Sciatic nerve (tissue), 2 donors: ENCODE measurements at regions of chr9 and their contacts with region 1.

Region 1: DNA sequence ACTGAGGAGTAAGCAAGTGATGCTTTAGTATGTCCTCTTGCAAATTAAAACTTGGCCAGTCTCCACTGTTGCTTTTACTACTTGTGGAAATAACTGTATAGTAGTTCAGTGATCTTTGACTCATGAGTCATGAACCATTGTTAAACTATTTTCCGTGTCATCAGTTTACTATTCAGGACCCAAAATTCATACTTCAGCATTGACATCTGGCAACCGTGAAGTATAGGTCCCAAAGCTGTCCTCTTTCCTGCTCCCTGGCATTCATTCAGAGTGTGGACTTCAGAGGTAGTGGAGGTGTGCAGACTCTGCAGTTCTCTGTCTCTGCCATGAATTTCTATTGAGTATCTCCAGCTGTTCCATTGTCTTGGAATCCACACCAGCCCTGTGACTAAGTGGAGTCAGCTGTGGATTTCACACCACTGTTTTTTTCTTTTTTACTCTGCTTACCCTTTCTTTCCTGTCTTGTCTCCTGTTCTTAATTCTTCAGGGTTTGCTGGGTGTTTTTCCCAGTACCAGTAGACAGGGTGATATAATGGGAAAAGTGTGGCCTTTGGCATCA is 7.5 kb downstream of the TDRD7 start:
- DNase-seq: no peak
- ATAC-seq: no peak

Region 2: GRCh38 chr9:95533996-95534680 is 1885.2 kb before region 1 on chr9:
- intact Hi-C with region 1: loop called (anchors 5 kb)
- DNase-seq: no peak
- ATAC-seq: no peak